Activated T-helper 2 cell treated with anti-CD3 and anti-CD28 coated beads, Interferon-gamma antibody, Interleukin-2, Interleukin-4, amounts not matched to agents 10 μg/mL and 5 μg/mL and 100 μg/mL, durations not matched to agents 14 hours and 24 hours and 36 hours (primary cell): ENCODE measurements at regions of chr19 and their contacts with region 1.

Region 1: GRCh38 chr19:7799640-7800355 is 30.2 kb upstream of the EVI5L start:
- DNase-seq: peak; percentile 35
- H3K4me3 Mint-ChIP-seq: no peak overlapping the region
- H3K27ac Mint-ChIP-seq: no peak overlapping the region
- H3K4me1 Mint-ChIP-seq: no peaks in the 10 kb centered on the region
- H3K27me3 Mint-ChIP-seq: peaks cover 55% of the 10 kb centered on the region

Region 2: GRCh38 chr19:7562646-7563393 is 237.0 kb before region 1 on chr19:
- intact Hi-C with region 1: loop called (anchors 1 kb)
- DNase-seq: no peak
- H3K4me3 Mint-ChIP-seq: no peak overlapping the region
- H3K27ac Mint-ChIP-seq: no peak overlapping the region
- H3K4me1 Mint-ChIP-seq: no peaks in the 10 kb centered on the region
- H3K27me3 Mint-ChIP-seq: no peaks in the 10 kb centered on the region

Region 3: GRCh38 chr19:7652061-7652641 is 147.6 kb before region 1 on chr19:
- intact Hi-C with region 1: loop called (anchors 1 kb)
- DNase-seq: peak; percentile 79
- H3K4me3 Mint-ChIP-seq: peak overlapping the region; percentile 52
- H3K27ac Mint-ChIP-seq: peak overlapping the region; percentile 72
- H3K4me1 Mint-ChIP-seq: peaks cover 12% of the 10 kb centered on the region
- H3K27me3 Mint-ChIP-seq: peaks cover 3% of the 10 kb centered on the region